Caco-2 (cell line): ENCODE measurements at regions of chr7 and their contacts with region 1.

Region 1: DNA sequence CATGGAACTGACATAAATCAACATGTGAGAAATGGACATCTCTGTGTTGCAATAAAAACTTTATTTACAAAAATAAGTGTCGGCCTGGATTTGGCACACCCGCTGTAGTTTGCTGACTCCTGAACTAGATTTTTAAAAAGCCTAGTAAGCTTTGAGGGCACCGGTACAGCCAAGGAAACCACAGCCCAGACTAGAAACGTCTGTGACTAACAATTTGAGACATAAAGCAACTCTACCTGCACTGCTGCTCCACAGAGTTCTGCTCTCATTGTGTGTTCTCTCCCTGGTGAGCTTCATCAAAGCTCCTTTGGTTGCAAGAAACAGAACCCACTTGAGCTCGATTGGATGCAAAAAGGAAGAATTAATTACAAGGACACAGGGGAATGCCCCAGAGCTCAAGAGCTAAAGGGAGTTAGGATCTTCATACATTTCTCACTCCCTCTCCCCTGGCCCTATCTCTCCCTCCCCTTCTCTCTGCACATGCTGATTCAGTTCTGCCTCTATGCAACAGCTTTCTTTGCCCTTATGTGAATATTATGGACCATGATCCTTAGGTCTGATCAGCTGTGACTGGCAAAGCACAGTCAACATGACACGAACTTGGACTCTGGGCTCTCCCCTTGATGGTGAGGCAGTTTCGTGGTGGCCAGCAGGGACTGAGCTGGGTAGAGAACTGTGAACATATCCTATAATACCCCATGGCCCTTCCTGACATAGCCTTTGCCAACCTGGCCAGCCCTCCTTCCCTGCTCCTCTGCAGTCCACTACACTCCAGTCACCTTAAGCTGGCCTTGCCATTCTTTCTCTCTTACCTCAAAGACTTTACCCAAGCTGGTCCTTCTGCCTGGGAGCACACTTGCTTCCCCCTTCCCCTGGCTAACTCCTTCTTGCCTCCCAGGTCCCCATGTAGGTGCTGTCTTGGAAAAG is 77.5 kb upstream of the YAE1 start:
- DNase-seq: no peak
- H3K4me3 ChIP-seq: no peak overlapping the region
- H3K4me3 Mint-ChIP-seq: no peak overlapping the region
- H3K27ac Mint-ChIP-seq: no peak overlapping the region
- H3K4me1 ChIP-seq: no peaks in the 10 kb centered on the region
- H3K4me1 Mint-ChIP-seq: no peaks in the 10 kb centered on the region
- H3K27me3 ChIP-seq: no peaks in the 10 kb centered on the region; the same call in 1 of the 2 replicates
- H3K27me3 Mint-ChIP-seq: peaks cover 26% of the 10 kb centered on the region
- CTCF ChIP-seq: no peak

Region 2: GRCh38 chr7:39233851-39234529 is 254.7 kb before region 1 on chr7:
- CTCF ChIA-PET with region 1: no interaction called
- POLR2A ChIA-PET with region 1: no interaction called
- intact Hi-C with region 1: no loop called
- DNase-seq: no peak
- H3K4me3 ChIP-seq: no peak overlapping the region
- H3K4me3 Mint-ChIP-seq: no peak overlapping the region
- H3K27ac Mint-ChIP-seq: no peak overlapping the region
- H3K4me1 ChIP-seq: no peaks in the 10 kb centered on the region
- H3K4me1 Mint-ChIP-seq: no peaks in the 10 kb centered on the region
- H3K27me3 ChIP-seq: peaks cover 1% of the 10 kb centered on the region
- H3K27me3 Mint-ChIP-seq: peaks cover 3% of the 10 kb centered on the region
- CTCF ChIP-seq: no peak

Region 3: DNA sequence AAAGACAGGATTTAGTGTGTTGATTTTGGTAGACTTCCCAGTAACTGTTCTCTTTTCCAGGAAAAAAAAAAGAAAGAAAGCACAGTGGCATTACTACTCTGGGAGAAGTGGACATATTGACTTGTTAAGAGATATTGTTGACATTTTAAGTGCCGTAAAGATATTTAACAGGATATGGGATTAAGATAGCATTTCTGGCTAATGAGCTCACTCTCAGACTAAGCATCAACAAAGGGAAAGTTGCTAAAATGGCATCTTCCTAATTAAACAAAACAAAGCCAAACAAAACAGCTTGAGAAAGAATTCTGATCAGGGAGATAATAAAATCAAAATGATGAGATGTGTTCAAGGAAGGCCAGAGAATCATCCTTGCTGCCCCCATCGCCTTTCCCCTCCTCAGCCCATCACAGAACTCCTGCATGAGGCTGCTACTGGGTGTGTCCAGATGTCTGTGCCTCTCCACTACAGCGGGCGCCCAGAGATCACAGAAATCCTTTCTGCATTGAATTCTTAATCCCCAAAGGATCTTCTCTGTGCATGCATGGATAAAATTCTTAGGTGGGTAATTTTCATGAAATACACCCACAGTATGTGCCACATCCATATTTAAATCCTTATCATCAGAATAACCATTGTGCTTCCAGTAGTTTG is 240.6 kb before region 1 on chr7:
- CTCF ChIA-PET with region 1: interaction called, 10 read pairs
- POLR2A ChIA-PET with region 1: no interaction called
- intact Hi-C with region 1: no loop called
- DNase-seq: no peak
- H3K4me3 ChIP-seq: no peak overlapping the region
- H3K4me3 Mint-ChIP-seq: no peak overlapping the region
- H3K27ac Mint-ChIP-seq: no peak overlapping the region
- H3K4me1 ChIP-seq: no peaks in the 10 kb centered on the region
- H3K4me1 Mint-ChIP-seq: no peaks in the 10 kb centered on the region
- H3K27me3 ChIP-seq: no peaks in the 10 kb centered on the region
- H3K27me3 Mint-ChIP-seq: peaks cover 20% of the 10 kb centered on the region
- CTCF ChIP-seq: no peak

Region 4: GRCh38 chr7:39265641-39266591 is 222.8 kb before region 1 on chr7:
- CTCF ChIA-PET with region 1: no interaction called
- POLR2A ChIA-PET with region 1: no interaction called
- intact Hi-C with region 1: no loop called
- DNase-seq: no peak
- H3K4me3 ChIP-seq: no peak overlapping the region
- H3K4me3 Mint-ChIP-seq: no peak overlapping the region
- H3K27ac Mint-ChIP-seq: no peak overlapping the region
- H3K4me1 ChIP-seq: no peaks in the 10 kb centered on the region
- H3K4me1 Mint-ChIP-seq: no peaks in the 10 kb centered on the region
- H3K27me3 ChIP-seq: no peaks in the 10 kb centered on the region
- H3K27me3 Mint-ChIP-seq: peaks cover 3% of the 10 kb centered on the region
- CTCF ChIP-seq: no peak

Region 5: GRCh38 chr7:39644170-39644569 is 155.4 kb after region 1 on chr7:
- CTCF ChIA-PET with region 1: no interaction called
- POLR2A ChIA-PET with region 1: no interaction called
- intact Hi-C with region 1: no loop called
- DNase-seq: no peak
- H3K4me3 ChIP-seq: no peak overlapping the region
- H3K4me3 Mint-ChIP-seq: no peak overlapping the region
- H3K27ac Mint-ChIP-seq: no peak overlapping the region
- H3K4me1 ChIP-seq: 0 out of 2 replicates have a peak, but pooled peaks cover 3% of the 10 kb centered on the region
- H3K4me1 Mint-ChIP-seq: peaks cover 7% of the 10 kb centered on the region
- H3K27me3 ChIP-seq: no peaks in the 10 kb centered on the region
- H3K27me3 Mint-ChIP-seq: no peaks in the 10 kb centered on the region
- CTCF ChIP-seq: no peak